Mammary epithelial cell (primary cell): ENCODE measurements at regions of chr7 and their contacts with region 1.

Region 1: DNA sequence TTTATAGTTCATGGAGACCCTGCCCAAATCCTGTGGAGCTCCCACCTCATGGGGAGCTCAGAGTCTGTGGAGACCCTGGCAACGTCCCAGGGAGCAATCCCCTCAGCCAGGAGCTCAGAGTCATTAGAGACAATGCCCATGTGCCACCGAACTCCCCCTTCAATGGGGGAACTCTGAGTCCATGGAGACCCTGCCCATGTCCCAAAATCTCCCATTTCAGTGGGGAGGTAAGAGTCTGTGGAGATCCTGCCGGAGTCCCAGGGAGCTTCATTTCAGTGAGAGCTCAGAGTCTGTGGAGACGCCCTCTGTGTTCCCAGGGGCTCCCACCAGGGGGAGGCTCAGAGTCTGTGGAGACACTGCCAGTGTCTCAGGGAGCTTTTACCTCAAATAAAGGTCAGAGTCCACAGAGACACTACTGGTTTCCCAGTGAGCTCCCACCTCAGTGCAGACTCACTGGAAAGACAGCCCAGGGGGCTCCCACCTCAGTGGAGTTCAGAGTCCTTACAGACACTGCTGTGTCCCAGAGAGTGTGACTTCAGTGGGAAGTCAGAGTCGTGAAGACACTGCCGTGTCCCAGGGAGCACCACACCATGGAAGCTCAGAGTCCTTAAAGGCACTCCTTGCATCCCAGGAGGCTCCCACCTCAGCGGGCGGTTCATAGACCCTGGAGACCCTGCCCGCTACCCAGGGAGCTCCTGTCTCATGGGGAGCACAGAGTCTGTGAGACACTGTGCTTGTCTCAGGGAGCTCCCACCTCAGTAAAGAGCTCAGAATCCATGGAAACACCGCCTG is 5.0 kb downstream of the MYO1G start:
- DNase-seq: no peak
- H3K4me3 ChIP-seq: no peak overlapping the region
- H3K27ac ChIP-seq: no peak overlapping the region
- H3K4me1 ChIP-seq: no peaks in the 10 kb centered on the region
- H3K27me3 ChIP-seq: no peaks in the 10 kb centered on the region
- CTCF ChIP-seq: peak; percentile 56 to 65

Region 2: GRCh38 chr7:44909596-44910389 is 64.0 kb before region 1 on chr7:
- CTCF ChIA-PET with region 1: no interaction called
- dilution Hi-C with region 1: loop called (anchors 5 kb)
- in situ Hi-C with region 1: no loop called
- intact Hi-C with region 1: no loop called
- DNase-seq: no peak
- H3K4me3 ChIP-seq: no peak overlapping the region
- H3K27ac ChIP-seq: no peak overlapping the region
- H3K4me1 ChIP-seq: peaks cover 11% of the 10 kb centered on the region
- H3K27me3 ChIP-seq: no peaks in the 10 kb centered on the region
- CTCF ChIP-seq: no peak

Region 3: GRCh38 chr7:44944821-44945220 is 29.0 kb before region 1 on chr7:
- CTCF ChIA-PET with region 1: no interaction called
- dilution Hi-C with region 1: no loop called
- in situ Hi-C with region 1: no loop called
- intact Hi-C with region 1: no loop called
- DNase-seq: no peak
- H3K4me3 ChIP-seq: no peak overlapping the region
- H3K27ac ChIP-seq: no peak overlapping the region
- H3K4me1 ChIP-seq: no peaks in the 10 kb centered on the region
- H3K27me3 ChIP-seq: no peaks in the 10 kb centered on the region
- CTCF ChIP-seq: no peak

Region 4: DNA sequence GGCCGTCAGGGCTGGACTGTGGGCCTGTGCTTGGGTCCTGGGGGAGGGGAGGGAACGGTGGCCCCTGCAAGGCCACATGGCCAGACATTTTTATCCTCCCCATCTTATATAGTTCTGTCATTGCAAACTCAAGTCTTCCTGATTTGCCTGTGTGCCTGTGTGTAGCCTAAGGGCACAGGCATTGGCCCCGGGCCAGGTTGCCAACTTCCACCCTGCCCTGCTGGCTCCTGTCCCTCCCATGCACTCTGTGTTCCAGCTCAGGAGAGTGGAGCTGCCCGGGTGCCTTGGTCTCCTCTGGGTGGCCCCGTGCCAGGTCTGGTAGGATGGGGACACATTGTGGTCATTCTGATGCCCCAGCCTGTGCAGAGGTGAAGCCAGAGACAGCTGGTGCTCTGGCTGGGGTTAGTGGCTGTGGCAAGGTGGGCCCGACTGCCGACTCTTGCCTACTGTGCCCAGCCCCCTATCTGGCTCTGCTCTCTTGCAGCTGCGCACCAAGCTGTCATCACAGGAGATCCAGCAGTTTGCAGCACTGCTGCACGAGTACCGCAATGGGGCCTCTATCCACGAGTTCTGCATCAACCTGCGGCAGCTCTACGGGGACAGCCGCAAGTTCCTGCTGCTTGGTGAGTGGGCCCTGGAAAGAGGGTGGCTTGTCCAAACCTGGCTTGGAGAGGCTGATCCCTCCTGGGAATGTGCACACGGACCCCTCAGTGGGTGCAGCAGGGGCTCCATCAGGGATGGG is 100.2 kb after region 1 on chr7:
- CTCF ChIA-PET with region 1: interaction called, 5 read pairs
- dilution Hi-C with region 1: loop called (anchors 10 kb)
- in situ Hi-C with region 1: no loop called
- intact Hi-C with region 1: no loop called
- DNase-seq: no peak
- H3K4me3 ChIP-seq: no peak overlapping the region
- H3K27ac ChIP-seq: no peak overlapping the region
- H3K4me1 ChIP-seq: peaks cover 12% of the 10 kb centered on the region
- H3K27me3 ChIP-seq: no peaks in the 10 kb centered on the region
- CTCF ChIP-seq: no peak